Activated CD4-positive, alpha-beta T cell treated with anti-CD3 and anti-CD28 coated beads for 36 hours (primary cell): ENCODE measurements at regions of chr1 and their contacts with region 1.

Region 1: GRCh38 chr1:198937231-198938031 is 298.6 kb downstream of the PTPRC start:
- DNase-seq: peak; percentile 65
- ATAC-seq: peak; percentile 93
- H3K4me3 Mint-ChIP-seq: no peak overlapping the region
- H3K27ac Mint-ChIP-seq: peak overlapping the region; percentile 85
- H3K4me1 Mint-ChIP-seq: peaks cover 21% of the 10 kb centered on the region
- H3K27me3 Mint-ChIP-seq: no peaks in the 10 kb centered on the region

Region 2: GRCh38 chr1:198167436-198167934 is 769.9 kb before region 1 on chr1:
- CTCF ChIA-PET with region 1: no interaction called
- POLR2A ChIA-PET with region 1: no interaction called
- intact Hi-C with region 1: loop called (anchors 10 kb)
- DNase-seq: peak; percentile 42
- ATAC-seq: peak; percentile 18
- H3K4me3 Mint-ChIP-seq: peak overlapping the region; percentile 54
- H3K27ac Mint-ChIP-seq: peak overlapping the region; percentile 93
- H3K4me1 Mint-ChIP-seq: peaks cover 93% of the 10 kb centered on the region
- H3K27me3 Mint-ChIP-seq: no peaks in the 10 kb centered on the region

Region 3: DNA sequence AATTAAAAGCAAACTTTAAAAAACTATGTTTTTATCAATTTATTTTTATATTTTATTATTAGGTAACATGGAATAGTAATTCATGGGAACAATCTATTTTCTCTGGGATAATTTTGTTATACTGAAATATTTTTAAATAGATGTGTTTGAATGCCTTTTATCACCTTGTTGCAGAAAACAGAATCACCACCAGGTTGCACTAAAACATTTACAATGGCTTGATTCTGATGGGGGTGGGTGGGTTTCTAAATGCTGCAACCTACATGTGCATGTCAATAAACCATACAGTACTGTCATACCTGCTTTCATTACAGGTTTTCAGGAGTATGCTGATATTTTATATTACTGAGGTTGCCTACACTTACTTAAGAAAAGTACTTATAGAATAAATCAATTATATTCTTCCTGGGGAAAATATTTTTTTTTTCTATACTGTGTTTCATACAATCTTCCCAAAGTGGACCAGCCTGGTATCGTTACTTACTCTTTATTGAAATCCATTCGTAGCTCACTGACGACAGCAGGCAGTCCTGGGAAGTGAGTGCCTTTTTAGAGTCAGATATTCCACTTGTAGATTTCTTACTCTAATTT is 165.8 kb before region 1 on chr1:
- CTCF ChIA-PET with region 1: no interaction called
- POLR2A ChIA-PET with region 1: no interaction called
- intact Hi-C with region 1: loop called in 1 of 2 experiments (anchors 10 kb)
- DNase-seq: peak; percentile 24
- ATAC-seq: peak; percentile 70
- H3K4me3 Mint-ChIP-seq: no peak overlapping the region
- H3K27ac Mint-ChIP-seq: no peak overlapping the region
- H3K4me1 Mint-ChIP-seq: peaks cover 6% of the 10 kb centered on the region
- H3K27me3 Mint-ChIP-seq: no peaks in the 10 kb centered on the region

Region 4: DNA sequence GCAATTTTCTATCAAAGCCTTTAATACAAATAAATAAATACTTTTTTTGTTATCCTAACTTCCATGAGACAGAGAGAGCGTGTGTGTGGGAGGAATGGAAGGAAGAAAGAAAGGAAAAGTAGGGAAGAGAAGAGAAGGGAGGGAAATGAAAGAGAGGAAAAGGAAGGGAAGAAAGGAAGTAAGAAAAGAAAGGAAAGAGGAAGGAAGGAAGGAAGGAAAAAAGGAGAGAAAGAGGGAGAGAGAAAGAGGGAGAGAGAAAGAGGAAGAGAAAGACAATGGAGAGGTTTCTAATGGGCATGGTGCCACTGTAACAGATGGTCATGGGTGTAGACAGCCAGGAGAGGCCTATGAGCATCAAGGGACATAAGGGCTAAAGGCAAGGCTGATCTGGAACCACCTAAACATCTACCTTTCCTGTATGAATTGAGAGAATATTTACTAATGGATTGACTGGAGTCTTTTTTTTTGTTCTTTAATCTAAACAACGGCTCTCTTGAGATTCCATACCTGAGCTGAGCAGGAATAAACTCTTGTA is 63.7 kb before region 1 on chr1:
- CTCF ChIA-PET with region 1: no interaction called
- POLR2A ChIA-PET with region 1: no interaction called
- intact Hi-C with region 1: no loop called
- DNase-seq: no peak
- ATAC-seq: no peak
- H3K4me3 Mint-ChIP-seq: no peak overlapping the region
- H3K27ac Mint-ChIP-seq: no peak overlapping the region
- H3K4me1 Mint-ChIP-seq: no peaks in the 10 kb centered on the region
- H3K27me3 Mint-ChIP-seq: no peaks in the 10 kb centered on the region

Region 5: DNA sequence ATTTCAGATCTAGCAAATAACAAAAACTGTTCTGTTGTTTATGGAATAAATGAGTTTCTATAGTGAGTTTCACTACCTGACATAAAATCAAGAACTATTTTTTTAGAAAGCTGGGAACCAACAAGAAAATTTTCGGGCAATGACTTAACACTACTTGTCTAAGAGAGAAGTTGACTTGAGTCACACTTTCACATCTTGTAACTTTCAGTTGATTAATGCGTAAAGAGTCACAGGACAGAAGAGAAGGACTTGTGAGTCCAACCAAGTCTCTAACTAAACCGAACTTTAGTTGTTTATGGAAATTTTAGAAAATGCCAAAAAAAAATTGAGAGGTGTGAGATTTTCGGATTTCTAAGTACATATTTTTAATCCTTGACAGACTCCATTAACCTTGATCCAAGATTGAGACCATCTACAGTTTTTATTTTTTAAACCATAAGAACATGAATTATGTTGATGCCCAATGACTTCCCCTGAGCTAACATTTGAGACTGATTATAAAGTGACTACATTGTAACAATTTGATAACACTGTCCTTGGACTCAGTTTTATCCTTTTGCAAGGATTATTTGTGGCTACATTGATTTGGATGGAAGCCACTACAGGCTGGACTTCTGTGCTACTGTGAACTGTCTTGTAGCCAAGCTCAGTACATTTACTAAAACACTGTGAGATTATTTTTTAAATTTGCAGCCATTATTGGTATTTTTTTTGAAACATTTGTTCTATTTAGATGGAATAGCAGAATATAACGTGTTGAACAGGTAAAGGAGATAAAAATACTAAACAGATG is 14.6 kb before region 1 on chr1:
- CTCF ChIA-PET with region 1: interaction called, 11 read pairs
- POLR2A ChIA-PET with region 1: interaction called, 8 read pairs
- intact Hi-C with region 1: loop called (anchors 1 to 2 kb)
- DNase-seq: no peak
- ATAC-seq: peak; percentile 56
- H3K4me3 Mint-ChIP-seq: no peak overlapping the region
- H3K27ac Mint-ChIP-seq: peak overlapping the region; percentile 76
- H3K4me1 Mint-ChIP-seq: peaks cover 74% of the 10 kb centered on the region
- H3K27me3 Mint-ChIP-seq: no peaks in the 10 kb centered on the region

Region 6: DNA sequence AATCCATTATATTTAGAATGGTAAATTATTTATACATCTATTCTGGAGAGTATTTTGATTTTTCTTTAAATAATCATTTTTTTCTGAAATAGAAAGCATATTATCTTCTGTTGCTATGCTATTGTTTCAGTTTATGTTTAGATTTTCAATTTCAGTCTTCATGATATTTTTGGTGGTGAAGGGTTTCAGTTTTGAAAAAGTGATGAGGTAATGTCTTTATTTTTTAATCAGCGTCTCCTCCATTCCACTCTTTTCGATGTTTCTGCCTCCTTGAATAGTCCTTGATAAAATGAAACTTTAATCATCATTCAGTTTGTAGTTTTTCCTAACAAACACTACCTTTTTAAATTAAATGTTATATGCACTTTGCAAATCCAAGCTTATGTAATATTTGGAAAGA is 130.1 kb after region 1 on chr1:
- CTCF ChIA-PET with region 1: no interaction called
- POLR2A ChIA-PET with region 1: no interaction called
- intact Hi-C with region 1: no loop called
- DNase-seq: no peak
- ATAC-seq: no peak
- H3K4me3 Mint-ChIP-seq: no peak overlapping the region
- H3K27ac Mint-ChIP-seq: no peak overlapping the region
- H3K4me1 Mint-ChIP-seq: peaks cover 4% of the 10 kb centered on the region
- H3K27me3 Mint-ChIP-seq: no peaks in the 10 kb centered on the region

Region 7: DNA sequence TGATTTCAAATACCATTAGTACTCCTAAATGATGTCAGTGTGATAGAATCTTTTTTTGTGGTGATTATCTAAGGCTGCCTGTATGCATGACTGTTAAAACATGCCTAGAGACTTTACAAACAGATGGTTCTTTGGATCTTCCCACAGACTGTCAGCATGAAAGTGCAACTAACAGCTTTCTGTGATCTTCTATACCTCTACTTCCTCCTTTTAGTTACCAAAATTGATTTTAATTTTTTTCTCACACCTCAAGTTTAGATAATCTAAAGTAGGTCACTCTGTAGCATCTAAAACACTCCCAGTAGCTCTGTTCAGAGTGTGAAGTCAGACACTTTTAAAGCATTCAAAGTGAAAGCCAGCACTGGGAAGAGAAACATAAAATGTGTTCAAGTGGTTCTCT is 235.9 kb after region 1 on chr1:
- CTCF ChIA-PET with region 1: no interaction called
- POLR2A ChIA-PET with region 1: interaction called, 7 read pairs
- intact Hi-C with region 1: loop called in 1 of 2 experiments (anchors 5 kb)
- DNase-seq: peak; percentile 11
- ATAC-seq: peak; percentile 89
- H3K4me3 Mint-ChIP-seq: no peak overlapping the region
- H3K27ac Mint-ChIP-seq: peak overlapping the region; percentile 39
- H3K4me1 Mint-ChIP-seq: peaks cover 58% of the 10 kb centered on the region
- H3K27me3 Mint-ChIP-seq: peaks cover 3% of the 10 kb centered on the region

Region 8: DNA sequence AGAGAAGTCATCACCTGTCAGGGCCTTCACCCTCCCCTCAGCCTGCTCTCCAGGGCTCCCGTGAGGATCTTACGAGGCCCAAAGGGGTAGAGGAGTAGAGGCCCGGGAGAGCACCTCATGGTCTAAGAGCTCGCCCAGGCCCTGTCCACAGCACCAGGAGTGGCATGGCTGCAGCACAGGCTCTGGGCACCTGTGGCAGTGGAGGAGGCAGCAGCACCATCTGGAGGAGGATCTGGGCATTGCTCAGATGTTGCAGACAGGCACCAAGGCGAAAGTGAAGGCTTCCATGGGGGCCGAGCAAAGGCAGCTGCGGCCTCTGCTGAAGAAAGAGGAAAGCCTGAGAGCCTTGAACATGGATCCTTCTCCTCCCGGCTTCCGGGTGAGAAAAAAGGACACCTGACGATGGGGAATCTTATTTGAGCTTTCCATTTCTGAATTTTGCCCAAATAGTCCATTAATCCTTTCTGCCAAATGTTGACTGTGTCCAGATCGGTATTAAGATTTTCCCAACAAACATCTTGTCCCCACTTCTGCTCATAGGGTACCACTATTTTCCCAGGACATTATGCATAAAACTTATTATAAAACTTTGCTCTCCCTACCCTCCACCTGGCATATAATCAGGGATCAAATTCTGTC is 306.1 kb after region 1 on chr1:
- CTCF ChIA-PET with region 1: no interaction called
- POLR2A ChIA-PET with region 1: no interaction called
- intact Hi-C with region 1: loop called in 1 of 2 experiments (anchors 1 kb)
- DNase-seq: peak; percentile 86
- ATAC-seq: peak; percentile 100
- H3K4me3 Mint-ChIP-seq: no peak overlapping the region
- H3K27ac Mint-ChIP-seq: no peak overlapping the region
- H3K4me1 Mint-ChIP-seq: peaks cover 4% of the 10 kb centered on the region
- H3K27me3 Mint-ChIP-seq: peaks cover 6% of the 10 kb centered on the region